Activated T-helper 2 cell treated with anti-CD3 and anti-CD28 coated beads, Interferon-gamma antibody, Interleukin-2, Interleukin-4, amounts not matched to agents 10 μg/mL and 5 μg/mL and 100 μg/mL, durations not matched to agents 14 hours and 24 hours and 36 hours (primary cell): ENCODE measurements at regions of chr3 and their contacts with region 1.

Region 1: GRCh38 chr3:129627429-129628168 is 21.1 kb upstream of the PLXND1 start:
- DNase-seq: peak; percentile 44
- H3K4me3 Mint-ChIP-seq: peak overlapping the region; percentile 86
- H3K27ac Mint-ChIP-seq: peak overlapping the region; percentile 79
- H3K4me1 Mint-ChIP-seq: peaks cover 18% of the 10 kb centered on the region
- H3K27me3 Mint-ChIP-seq: peaks cover 5% of the 10 kb centered on the region

Region 2: GRCh38 chr3:129611812-129612533 is 15.6 kb before region 1 on chr3:
- intact Hi-C with region 1: loop called (anchors 2 kb)
- DNase-seq: no peak
- H3K4me3 Mint-ChIP-seq: no peak overlapping the region
- H3K27ac Mint-ChIP-seq: no peak overlapping the region
- H3K4me1 Mint-ChIP-seq: peaks cover 6% of the 10 kb centered on the region
- H3K27me3 Mint-ChIP-seq: peaks cover 25% of the 10 kb centered on the region

Region 3: DNA sequence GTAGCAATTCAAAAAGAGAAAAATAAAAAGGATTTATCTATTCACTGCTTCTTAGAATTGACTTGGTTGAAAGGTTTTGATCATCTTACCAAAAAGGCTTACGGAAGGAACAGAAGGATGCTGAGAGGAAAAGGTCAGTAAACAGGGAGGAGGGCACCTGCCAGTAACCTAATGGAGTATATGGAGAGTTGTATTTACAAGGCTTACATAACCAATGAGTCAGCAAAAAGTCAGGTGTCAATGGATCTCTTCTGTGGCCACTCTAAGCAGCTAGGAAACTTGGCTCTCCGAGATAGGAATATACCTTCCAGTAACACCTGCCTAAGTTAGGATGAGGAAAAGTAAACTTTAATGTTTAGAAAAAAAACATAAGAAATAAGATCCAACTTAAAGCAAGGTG is 59.3 kb after region 1 on chr3:
- intact Hi-C with region 1: no loop called
- DNase-seq: no peak
- H3K4me3 Mint-ChIP-seq: no peak overlapping the region
- H3K27ac Mint-ChIP-seq: no peak overlapping the region
- H3K4me1 Mint-ChIP-seq: peaks cover 7% of the 10 kb centered on the region
- H3K27me3 Mint-ChIP-seq: no peaks in the 10 kb centered on the region

Region 4: DNA sequence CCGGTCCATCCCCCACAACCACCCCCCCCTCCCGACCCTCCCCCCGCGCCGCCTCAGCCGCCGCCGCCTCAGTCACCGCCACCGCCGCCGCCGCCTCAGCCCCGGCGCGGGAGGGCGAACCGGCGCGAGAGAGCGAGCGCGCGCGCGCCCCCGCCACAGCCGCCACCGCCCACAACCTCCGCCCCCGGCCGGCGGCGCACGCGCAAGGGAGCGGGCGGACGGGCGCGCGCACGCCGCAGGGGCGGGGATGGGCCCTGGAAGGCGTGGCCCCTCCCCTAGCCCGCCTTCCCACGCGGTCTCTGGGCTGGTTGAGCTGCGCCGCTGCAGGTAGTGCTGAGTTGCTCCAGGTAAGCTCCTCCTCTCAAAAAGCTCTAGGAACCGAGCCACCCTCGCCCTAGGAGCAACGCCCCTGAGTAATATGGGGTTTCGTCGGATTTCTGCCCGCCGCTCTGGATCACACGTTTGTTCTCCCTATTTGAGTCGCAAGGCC is 266.0 kb after region 1 on chr3 and contains the start of gene TMCC1:
- intact Hi-C with region 1: loop called (anchors 5 kb)
- DNase-seq: peak; percentile 83
- H3K4me3 Mint-ChIP-seq: peak within 1 kb of the TSS; percentile 88
- H3K27ac Mint-ChIP-seq: peak within 1 kb of the TSS; percentile 85
- H3K4me1 Mint-ChIP-seq: peaks cover 35% of the 10 kb centered on the region
- H3K27me3 Mint-ChIP-seq: no peaks in the 10 kb centered on the region
- total RNA-seq, gene TMCC1: 18.0 and 21.3 TPM in 2 replicates

Region 5: GRCh38 chr3:130093741-130094391 is 466.3 kb after region 1 on chr3:
- intact Hi-C with region 1: loop called (anchors 5 kb)
- DNase-seq: peak; percentile 36
- H3K4me3 Mint-ChIP-seq: peak overlapping the region; percentile 13
- H3K27ac Mint-ChIP-seq: peak overlapping the region; percentile 21
- H3K4me1 Mint-ChIP-seq: peaks cover 32% of the 10 kb centered on the region
- H3K27me3 Mint-ChIP-seq: no peaks in the 10 kb centered on the region